ENCODE measurements at regions of chr7 and their contacts with region 1.

Region 1: GRCh38 chr7:94657771-94658693 is 2.1 kb upstream of the SGCE start:
- DNase-seq: peak; percentile 97
- ATAC-seq: peak; percentile 78
- H3K4me3 ChIP-seq: peak overlapping the region in 4 of 5 experiments; percentile 45 to 71 (median 64)
- H3K4me3 Mint-ChIP-seq: peak overlapping the region; percentile 94
- H3K27ac ChIP-seq: no peak overlapping the region
- H3K27ac Mint-ChIP-seq: peak overlapping the region; percentile 82
- H3K4me1 ChIP-seq: peaks cover 16 to 29% of the 10 kb centered on the region in 2 donors
- H3K4me1 Mint-ChIP-seq: peaks cover 26% of the 10 kb centered on the region
- H3K27me3 ChIP-seq: peaks cover 0 to 18% (median 13%) of the 10 kb centered on the region in 4 experiments
- H3K27me3 Mint-ChIP-seq: peaks cover 14% of the 10 kb centered on the region
- CTCF ChIP-seq: no peak

Region 2: DNA sequence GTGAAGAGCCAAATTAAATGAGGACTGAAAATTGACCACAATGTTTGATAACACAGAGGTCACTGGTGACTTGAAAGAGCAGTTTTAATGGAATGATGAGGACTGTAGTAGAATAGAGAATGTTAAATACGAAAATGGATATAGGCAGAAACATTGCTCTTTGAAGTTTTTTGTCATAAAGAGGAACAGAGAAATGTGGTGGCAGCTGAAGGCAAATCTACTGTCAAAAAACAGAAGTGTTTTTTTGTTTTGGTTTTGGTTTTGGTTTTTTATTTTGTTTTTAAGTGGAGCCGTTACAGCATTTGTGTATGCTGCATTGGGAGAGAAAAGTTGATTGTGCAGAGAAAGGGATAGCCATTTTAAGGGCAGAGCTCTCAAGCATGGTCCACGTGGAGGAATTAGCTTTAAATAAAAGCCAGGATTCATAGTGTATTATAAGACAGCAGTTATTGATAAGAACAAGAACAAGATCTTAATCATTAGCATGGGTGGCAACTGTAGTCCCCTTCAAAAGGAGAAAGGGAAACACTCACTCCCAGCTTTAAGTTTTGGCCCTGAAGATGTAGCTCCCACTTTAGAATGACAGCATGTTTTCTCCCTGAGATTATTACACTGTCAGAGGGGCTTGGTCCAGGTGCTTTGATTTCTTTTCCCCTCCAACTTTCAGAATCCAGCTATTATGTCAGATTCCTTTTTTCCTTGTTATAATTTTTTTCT is 497.2 kb before region 1 on chr7:
- CTCF ChIA-PET with region 1: no interaction called
- POLR2A ChIA-PET with region 1: no interaction called
- intact Hi-C with region 1: no loop called
- DNase-seq: peak; percentile 79
- ATAC-seq: peak; percentile 82
- H3K4me3 ChIP-seq: peak overlapping the region; percentile 1 to 52 (median 33)
- H3K4me3 Mint-ChIP-seq: peak overlapping the region; percentile 84
- H3K27ac ChIP-seq: peak overlapping the region; percentile 73 to 90
- H3K27ac Mint-ChIP-seq: peak overlapping the region; percentile 93
- H3K4me1 ChIP-seq: peaks cover 25 to 29% of the 10 kb centered on the region in 2 donors
- H3K4me1 Mint-ChIP-seq: peaks cover 49% of the 10 kb centered on the region
- H3K27me3 ChIP-seq: no peaks in the 10 kb centered on the region
- H3K27me3 Mint-ChIP-seq: no peaks in the 10 kb centered on the region
- CTCF ChIP-seq: no peak

Region 3: GRCh38 chr7:94190599-94191061 is 467.4 kb before region 1 on chr7:
- CTCF ChIA-PET with region 1: no interaction called
- POLR2A ChIA-PET with region 1: no interaction called
- intact Hi-C with region 1: no loop called
- DNase-seq: no peak
- ATAC-seq: no peak
- H3K4me3 ChIP-seq: no peak overlapping the region
- H3K4me3 Mint-ChIP-seq: no peak overlapping the region
- H3K27ac ChIP-seq: no peak overlapping the region
- H3K27ac Mint-ChIP-seq: no peak overlapping the region
- H3K4me1 ChIP-seq: no peaks in the 10 kb centered on the region
- H3K4me1 Mint-ChIP-seq: no peaks in the 10 kb centered on the region
- H3K27me3 ChIP-seq: no peaks in the 10 kb centered on the region
- H3K27me3 Mint-ChIP-seq: peaks cover 10% of the 10 kb centered on the region
- CTCF ChIP-seq: no peak

Region 4: DNA sequence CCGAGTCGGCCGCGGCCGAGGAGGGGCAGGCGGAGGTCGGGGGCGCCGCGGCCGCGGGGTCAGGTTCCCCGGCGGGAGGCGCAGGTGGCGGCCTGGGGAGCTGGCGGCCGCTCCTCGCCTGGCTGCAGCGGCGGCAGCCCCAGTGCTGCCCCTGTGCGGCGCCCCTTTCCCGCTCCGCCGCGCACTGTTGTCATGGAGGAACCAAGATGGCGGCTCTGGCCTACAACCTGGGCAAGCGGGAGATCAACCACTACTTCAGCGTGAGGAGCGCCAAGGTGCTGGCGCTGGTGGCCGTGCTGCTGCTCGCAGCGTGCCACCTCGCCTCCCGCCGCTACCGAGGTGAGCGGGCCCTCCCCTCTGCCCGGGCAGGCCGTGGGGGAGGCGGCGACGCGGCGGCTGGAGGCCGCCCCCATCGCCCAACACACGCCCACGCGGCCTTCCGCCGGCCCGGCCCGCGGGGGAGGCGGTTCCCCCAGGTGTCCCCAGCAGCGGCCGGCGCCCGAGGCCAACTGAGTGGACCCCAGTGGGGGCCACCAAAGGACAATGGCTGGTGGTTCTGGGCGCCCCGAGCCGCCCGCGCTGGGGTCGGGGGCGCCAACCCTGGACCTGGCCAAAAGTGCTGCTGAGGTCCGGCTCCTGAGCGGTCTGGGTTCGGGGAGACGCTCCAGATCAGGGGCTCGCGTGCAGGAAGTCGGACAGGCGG is 148.0 kb before region 1 on chr7:
- CTCF ChIA-PET with region 1: interaction called, 4 read pairs
- POLR2A ChIA-PET with region 1: no interaction called
- intact Hi-C with region 1: loop called (anchors 1 kb)
- DNase-seq: peak; percentile 88
- ATAC-seq: peak; percentile 76
- H3K4me3 ChIP-seq: peak overlapping the region; percentile 31 to 80 (median 73)
- H3K4me3 Mint-ChIP-seq: peak overlapping the region; percentile 88
- H3K27ac ChIP-seq: peak overlapping the region; percentile 77 to 92
- H3K27ac Mint-ChIP-seq: peak overlapping the region; percentile 93
- H3K4me1 ChIP-seq: peaks cover 18 to 20% of the 10 kb centered on the region in 2 donors
- H3K4me1 Mint-ChIP-seq: peaks cover 46% of the 10 kb centered on the region
- H3K27me3 ChIP-seq: no peaks in the 10 kb centered on the region
- H3K27me3 Mint-ChIP-seq: no peaks in the 10 kb centered on the region
- CTCF ChIP-seq: peak; percentile 5

Region 5: GRCh38 chr7:94591176-94591575 is 66.9 kb before region 1 on chr7:
- CTCF ChIA-PET with region 1: no interaction called
- POLR2A ChIA-PET with region 1: no interaction called
- intact Hi-C with region 1: loop called (anchors 2 kb)
- DNase-seq: peak; percentile 51
- ATAC-seq: peak; percentile 83
- H3K4me3 ChIP-seq: peak overlapping the region in 4 of 5 experiments; percentile 19 to 55 (median 42)
- H3K4me3 Mint-ChIP-seq: peak overlapping the region; percentile 67
- H3K27ac ChIP-seq: peak overlapping the region; percentile 36 to 52
- H3K27ac Mint-ChIP-seq: peak overlapping the region; percentile 1
- H3K4me1 ChIP-seq: peaks cover 11 to 17% of the 10 kb centered on the region in 2 donors
- H3K4me1 Mint-ChIP-seq: peaks cover 19% of the 10 kb centered on the region
- H3K27me3 ChIP-seq: no peaks in the 10 kb centered on the region
- H3K27me3 Mint-ChIP-seq: no peaks in the 10 kb centered on the region
- CTCF ChIP-seq: no peak

Measured in B cell (primary cell).